ENCODE measurements at regions of chr3 and their contacts with region 1.

Region 1: GRCh38 chr3:185353823-185354614 is 8.9 kb upstream of the MAP3K13 start:
- DNase-seq: peak; percentile 92
- H3K4me3 Mint-ChIP-seq: no peak overlapping the region
- H3K27ac Mint-ChIP-seq: no peak overlapping the region
- H3K4me1 Mint-ChIP-seq: no peaks in the 10 kb centered on the region
- H3K27me3 Mint-ChIP-seq: peaks cover 27% of the 10 kb centered on the region

Region 2: DNA sequence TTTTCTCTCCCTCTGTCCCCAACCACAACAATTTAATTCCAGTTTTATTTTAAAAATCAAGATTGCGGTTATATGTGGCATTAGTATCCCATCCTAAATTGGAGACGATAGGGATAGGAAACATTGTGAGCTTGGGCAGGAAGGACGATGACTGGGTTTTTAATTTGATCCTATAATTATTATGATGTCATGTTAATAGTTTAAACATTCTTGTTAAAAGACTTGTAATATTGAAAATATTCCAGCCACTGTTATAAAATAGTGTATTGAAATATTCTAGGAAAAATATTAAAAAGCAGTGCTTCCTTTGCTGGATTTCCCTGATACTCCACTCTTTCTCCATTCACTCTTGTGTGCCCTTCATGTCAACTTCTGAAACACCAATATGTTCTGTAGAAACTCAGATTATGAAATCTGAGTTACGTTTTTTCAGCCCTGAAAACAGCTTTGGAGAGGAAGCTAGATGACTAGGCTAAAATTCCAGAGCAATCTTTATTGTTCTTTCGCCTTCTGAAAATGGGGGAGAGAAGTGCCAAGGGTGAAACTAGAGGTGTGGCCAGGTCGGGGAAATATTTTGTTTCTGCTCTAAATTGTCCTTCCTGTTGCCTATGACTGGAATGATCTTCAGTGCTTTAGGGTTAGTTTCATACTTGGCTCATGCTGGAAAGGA is 37.1 kb before region 1 on chr3:
- intact Hi-C with region 1: no loop called
- DNase-seq: no peak
- H3K4me3 Mint-ChIP-seq: no peak overlapping the region
- H3K27ac Mint-ChIP-seq: no peak overlapping the region
- H3K4me1 Mint-ChIP-seq: peaks cover 4% of the 10 kb centered on the region
- H3K27me3 Mint-ChIP-seq: peaks cover 10% of the 10 kb centered on the region

Region 3: GRCh38 chr3:185558395-185558794 is 204.4 kb after region 1 on chr3:
- intact Hi-C with region 1: loop called (anchors 5 kb)
- DNase-seq: no peak
- H3K4me3 Mint-ChIP-seq: no peak overlapping the region
- H3K27ac Mint-ChIP-seq: no peak overlapping the region
- H3K4me1 Mint-ChIP-seq: peaks cover 13% of the 10 kb centered on the region
- H3K27me3 Mint-ChIP-seq: peaks cover 2% of the 10 kb centered on the region

Region 4: DNA sequence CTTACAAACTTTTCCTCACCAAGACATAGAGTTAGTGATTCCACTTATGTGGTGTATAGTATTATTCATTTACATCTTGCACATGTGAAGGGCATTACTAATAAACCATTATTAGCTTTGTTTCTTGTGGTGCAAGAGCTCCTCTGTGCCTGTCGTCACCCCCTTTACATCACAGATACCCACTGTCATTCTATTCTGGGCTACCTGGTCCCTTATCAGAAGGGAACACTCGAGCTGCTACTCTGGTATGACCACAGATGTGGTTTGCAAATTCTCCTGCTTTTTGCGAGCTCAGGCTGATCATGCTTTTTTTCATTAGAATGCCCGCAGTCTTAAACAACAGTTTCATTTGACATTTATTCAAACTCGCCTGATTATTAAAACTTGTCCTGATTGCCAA is 218.2 kb after region 1 on chr3:
- intact Hi-C with region 1: loop called (anchors 1 kb)
- DNase-seq: no peak
- H3K4me3 Mint-ChIP-seq: no peak overlapping the region
- H3K27ac Mint-ChIP-seq: no peak overlapping the region
- H3K4me1 Mint-ChIP-seq: peaks cover 2% of the 10 kb centered on the region
- H3K27me3 Mint-ChIP-seq: no peaks in the 10 kb centered on the region

Measured in activated CD4-positive, alpha-beta T cell treated with anti-CD3 and anti-CD28 coated beads, Interleukin-2, amount 10 ng/mL, durations not matched to agents 24 days and 14 days (primary cell).